ENCODE measurements at regions of chr12 and their contacts with region 1.

Region 1: DNA sequence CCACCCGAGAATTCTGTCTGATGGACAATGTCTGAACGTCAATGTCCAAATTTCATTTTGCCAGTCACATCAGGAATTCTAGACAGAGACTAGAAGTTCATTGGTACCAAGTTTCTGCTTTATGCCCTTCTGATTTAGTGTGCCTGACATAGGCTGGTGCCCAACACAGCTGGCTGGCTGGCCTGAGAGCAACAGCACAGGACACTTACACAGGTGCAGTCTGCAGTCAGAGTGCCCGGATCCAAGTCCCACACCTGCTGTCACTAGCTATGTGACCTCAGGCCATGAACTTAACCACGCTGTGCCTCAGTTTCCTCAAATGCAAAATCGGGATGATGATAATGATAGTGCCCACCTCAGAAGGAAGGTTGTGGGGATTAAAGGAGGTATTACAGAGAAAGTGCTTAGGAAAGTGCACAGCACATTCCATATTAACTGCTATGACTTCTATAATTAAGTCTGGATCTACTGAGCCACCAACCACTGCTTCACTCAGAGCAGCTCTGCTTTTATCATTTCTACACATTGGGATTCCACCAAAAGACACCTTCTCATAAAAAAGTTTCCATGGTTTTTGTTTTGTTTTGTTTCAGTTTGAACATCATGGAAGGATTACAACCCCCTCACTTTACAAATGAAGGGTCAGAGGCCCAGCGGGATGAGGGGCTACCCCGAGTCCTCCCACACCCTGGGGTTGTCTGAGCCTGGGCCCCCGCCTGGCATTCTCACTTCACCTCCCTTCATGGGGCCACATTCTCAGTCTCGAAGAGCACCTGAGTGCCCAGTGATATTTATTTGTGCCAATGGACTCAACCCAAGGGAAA is 168.8 kb upstream of the BCL2L14 start:
- DNase-seq: peak; percentile 75
- ATAC-seq: peak; percentile 78
- H3K4me3 Mint-ChIP-seq: peak overlapping the region; percentile 39
- H3K27ac Mint-ChIP-seq: peak overlapping the region; percentile 88
- H3K4me1 Mint-ChIP-seq: peaks cover 44% of the 10 kb centered on the region
- H3K27me3 Mint-ChIP-seq: peaks cover 2% of the 10 kb centered on the region

Region 2: GRCh38 chr12:11877869-11878780 is 23.8 kb before region 1 on chr12:
- CTCF ChIA-PET with region 1: interaction called, 3 read pairs
- POLR2A ChIA-PET with region 1: interaction called, 3 read pairs
- intact Hi-C with region 1: loop called in 1 of 2 experiments (anchors 2 kb)
- DNase-seq: peak; percentile 32
- ATAC-seq: peak; percentile 28
- H3K4me3 Mint-ChIP-seq: no peak overlapping the region
- H3K27ac Mint-ChIP-seq: peak overlapping the region; percentile 73
- H3K4me1 Mint-ChIP-seq: peaks cover 52% of the 10 kb centered on the region
- H3K27me3 Mint-ChIP-seq: no peaks in the 10 kb centered on the region

Region 3: DNA sequence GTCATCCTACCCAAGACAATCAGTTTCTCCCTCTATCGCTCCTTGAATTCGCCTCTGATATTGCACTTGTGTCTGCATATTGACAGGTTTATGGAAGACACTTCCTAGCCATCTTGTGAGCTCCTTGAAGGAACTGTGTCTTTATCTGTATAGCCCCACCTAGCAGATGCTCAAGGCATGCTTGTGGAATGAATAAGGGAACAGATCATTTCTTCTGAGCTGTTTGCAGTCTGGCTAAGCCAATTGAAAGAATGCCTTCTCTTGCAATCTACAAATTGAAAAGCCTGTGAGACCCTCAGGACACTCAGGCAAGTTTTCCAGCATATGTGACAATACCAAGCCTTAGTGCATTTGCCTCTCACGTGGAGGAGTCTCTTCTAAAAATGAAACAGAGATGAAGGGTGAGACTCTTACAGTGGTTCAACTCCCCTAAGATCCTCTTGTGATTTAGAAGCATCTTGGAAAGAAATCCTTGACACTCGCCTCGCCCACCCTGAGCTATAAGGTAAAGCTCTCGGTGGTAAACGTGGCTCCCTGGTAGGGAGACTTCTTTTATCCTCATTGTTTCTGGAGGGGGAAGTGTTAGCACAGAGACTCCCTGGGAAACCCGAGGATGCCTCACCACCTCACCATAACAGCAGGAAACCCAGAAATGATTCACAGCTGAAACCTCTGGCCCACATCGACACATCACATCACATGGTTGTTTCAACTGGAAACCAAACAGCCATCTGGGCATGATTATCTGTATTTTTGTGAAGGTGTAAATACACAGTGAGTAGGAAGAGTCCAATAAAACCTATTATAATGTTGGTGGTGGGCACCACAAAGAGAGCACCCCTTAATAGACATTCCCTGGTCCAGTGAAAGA is 56.5 kb after region 1 on chr12:
- CTCF ChIA-PET with region 1: no interaction called
- POLR2A ChIA-PET with region 1: interaction called, 3 read pairs
- intact Hi-C with region 1: loop called in 1 of 2 experiments (anchors 1 kb)
- DNase-seq: peak; percentile 78
- ATAC-seq: peak; percentile 97
- H3K4me3 Mint-ChIP-seq: peak overlapping the region; percentile 11
- H3K27ac Mint-ChIP-seq: peak overlapping the region; percentile 86
- H3K4me1 Mint-ChIP-seq: peaks cover 36% of the 10 kb centered on the region
- H3K27me3 Mint-ChIP-seq: peaks cover 11% of the 10 kb centered on the region

Measured in activated CD4-positive, alpha-beta T cell treated with anti-CD3 and anti-CD28 coated beads for 36 hours (primary cell).